ENCODE measurements at regions of chr16 and their contacts with region 1.

Region 1: DNA sequence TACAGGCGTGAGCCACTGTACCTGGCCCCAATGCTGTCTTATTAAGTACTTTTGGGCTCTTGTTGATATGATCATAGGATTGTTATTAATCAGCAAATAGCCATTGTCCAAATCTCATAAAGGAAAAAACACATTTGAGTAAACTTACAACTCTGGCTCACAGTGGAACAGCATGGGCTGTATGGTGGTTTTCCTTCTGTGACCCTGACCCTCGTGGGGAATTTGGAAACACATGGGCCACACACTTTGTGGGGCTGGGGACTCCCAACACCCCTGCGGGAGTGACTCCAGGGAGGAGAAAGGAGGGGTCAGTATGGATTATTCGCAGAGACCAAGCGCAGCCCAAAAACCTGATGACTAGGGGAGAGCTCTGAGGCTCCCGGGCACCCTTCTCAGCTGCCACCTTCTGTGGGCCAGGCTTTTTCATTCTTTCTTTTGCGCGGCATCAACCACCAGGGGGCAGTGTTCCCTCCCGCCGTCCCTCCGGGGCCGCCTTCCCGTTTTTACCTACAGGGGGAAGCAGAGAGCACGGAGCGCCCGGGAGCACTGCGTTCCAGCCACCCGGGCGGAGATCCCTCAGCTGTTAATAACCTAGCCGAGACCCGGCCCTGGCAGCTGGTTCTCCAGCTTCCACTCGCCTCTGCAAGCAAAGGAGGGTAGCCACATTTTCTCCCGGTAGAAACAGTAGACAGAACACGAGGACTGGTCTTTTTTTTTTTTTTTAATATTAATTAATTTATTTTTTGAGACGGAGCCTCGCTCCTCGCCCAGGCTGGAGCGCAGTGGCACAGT is 9.7 kb downstream of the TSNAXIP1 start:
- DNase-seq: no peak
- H3K4me3 ChIP-seq: no peak overlapping the region
- CTCF ChIP-seq: peak; percentile 99

Region 2: GRCh38 chr16:67667817-67668494 is 148.5 kb before region 1 on chr16:
- CTCF ChIA-PET with region 1: interaction called, 28 read pairs
- POLR2A ChIA-PET with region 1: no interaction called
- DNase-seq: peak; percentile 54
- H3K4me3 ChIP-seq: peak overlapping the region; percentile 23; the same call in 1 of the 2 replicates
- CTCF ChIP-seq: peak; percentile 97

Region 3: DNA sequence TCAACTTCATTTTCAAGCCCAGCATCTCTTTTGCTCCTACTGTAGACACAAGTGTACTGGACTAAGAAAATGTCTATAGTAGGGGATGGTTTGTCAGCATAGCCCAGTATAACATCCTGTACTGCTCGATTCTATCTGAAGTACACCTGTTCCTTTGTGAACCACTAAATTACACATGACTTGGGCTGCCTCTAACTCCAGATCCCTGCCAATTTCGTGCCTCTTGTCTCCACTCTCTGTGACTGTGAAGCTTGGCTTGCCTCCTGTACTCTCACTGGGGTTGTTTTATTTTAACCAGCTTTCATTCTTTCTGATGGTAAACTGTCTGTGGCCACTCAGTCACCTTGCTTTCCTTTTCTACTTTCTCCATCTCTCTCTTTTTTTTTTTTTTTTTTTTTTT is 121.8 kb before region 1 on chr16:
- CTCF ChIA-PET with region 1: no interaction called
- POLR2A ChIA-PET with region 1: no interaction called
- DNase-seq: no peak
- H3K4me3 ChIP-seq: no peak overlapping the region
- CTCF ChIP-seq: no peak

Region 4: GRCh38 chr16:67786491-67786890 is 29.9 kb before region 1 on chr16:
- CTCF ChIA-PET with region 1: interaction called, 13 read pairs
- POLR2A ChIA-PET with region 1: no interaction called
- DNase-seq: no peak
- H3K4me3 ChIP-seq: no peak overlapping the region
- CTCF ChIP-seq: no peak

Region 5: GRCh38 chr16:67841764-67842508 is 25.5 kb after region 1 on chr16 and contains the start of gene THAP11:
- CTCF ChIA-PET with region 1: interaction called, 181 read pairs
- POLR2A ChIA-PET with region 1: interaction called, 3 read pairs
- DNase-seq: no peak
- H3K4me3 ChIP-seq: peak within 1 kb of the TSS; percentile 97
- CTCF ChIP-seq: peak; percentile 90

Region 6: GRCh38 chr16:67883872-67884261 is 67.4 kb after region 1 on chr16:
- CTCF ChIA-PET with region 1: interaction called, 45 read pairs
- POLR2A ChIA-PET with region 1: no interaction called
- DNase-seq: no peak
- H3K4me3 ChIP-seq: no peak overlapping the region
- CTCF ChIP-seq: peak; percentile 88

Region 7: GRCh38 chr16:68005786-68006286 is 189.4 kb after region 1 on chr16:
- CTCF ChIA-PET with region 1: no interaction called
- POLR2A ChIA-PET with region 1: no interaction called
- DNase-seq: no peak
- H3K4me3 ChIP-seq: no peak overlapping the region
- CTCF ChIP-seq: no peak

Region 8: DNA sequence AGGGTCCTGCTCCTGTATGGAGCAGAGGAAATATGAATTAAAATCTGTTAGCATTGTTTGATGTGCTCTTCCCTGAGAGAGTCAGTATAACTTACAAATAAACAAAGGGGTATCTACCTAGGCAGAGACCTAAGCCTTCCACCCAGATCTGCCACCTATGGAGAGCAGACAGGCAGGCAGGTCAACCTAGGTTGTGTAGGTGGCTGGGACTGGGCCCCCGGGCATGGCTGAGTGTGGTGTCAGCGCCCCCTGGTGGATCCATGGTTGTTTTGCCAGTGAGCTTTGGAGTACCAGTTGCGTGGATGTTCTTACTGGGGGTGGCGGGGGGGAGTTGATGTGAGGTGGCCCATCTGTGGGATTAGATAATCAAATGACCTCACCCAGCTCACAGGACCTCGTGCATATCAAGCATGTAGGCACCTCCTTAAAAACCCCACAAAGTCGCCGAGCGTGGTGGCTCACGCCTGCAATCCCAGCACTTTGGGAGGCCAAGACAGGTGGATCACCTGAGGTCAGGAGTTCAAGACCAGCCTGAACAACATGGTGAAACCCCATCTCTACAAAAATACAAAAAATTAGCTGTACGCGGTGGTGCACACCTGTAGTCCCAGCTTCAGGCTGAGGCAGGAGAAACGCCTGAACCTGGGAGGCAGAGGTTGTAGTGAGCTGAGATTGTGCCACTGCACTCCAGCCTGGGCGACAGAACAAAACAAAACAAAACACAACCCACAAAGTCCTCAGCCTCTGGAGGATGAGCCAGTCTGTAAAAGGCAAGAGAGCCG is 224.3 kb after region 1 on chr16:
- CTCF ChIA-PET with region 1: interaction called, 19 read pairs
- POLR2A ChIA-PET with region 1: no interaction called
- DNase-seq: no peak
- H3K4me3 ChIP-seq: no peak overlapping the region
- CTCF ChIP-seq: peak; percentile 90

Measured in AG04449 (cell line).